Panc1 (cell line): ENCODE measurements at regions of chr12 and their contacts with region 1.

Region 1: DNA sequence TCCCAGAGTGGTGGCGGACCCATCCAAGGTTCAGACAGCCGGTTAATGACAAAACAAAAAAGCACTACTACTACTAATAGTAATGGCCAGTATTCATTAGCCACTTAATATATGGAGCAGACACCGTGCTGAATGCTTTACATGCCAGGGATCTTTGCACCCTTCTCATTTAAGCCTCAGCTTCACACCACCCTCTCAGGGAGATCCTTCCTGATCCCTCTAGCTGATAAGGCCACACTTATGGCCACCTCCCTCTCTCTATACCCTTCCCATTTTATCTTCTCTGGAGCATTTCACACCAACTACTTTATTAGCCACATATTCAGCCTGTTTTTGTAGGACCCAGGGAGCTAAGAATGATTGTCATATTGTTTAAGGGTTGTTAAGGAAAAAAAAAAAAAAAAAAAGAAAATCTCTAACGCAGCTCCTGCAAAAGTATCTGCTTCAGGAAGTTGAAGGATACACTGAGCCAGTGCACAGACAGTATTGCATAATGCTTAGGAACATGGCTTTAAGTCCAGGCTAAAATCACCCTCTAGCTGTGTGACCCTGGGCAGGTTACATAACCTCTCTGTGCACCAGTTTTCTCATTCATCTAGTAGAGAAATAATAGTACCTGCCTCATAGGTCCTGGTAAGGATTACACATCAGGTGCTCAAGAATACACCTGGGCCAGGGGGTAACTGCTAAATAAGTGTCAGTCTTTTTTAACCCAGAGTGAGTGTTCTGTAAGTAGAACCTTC is 29.4 kb downstream of the NUAK1 start:
- DNase-seq: no peak
- ATAC-seq: no peak
- H3K4me3 ChIP-seq: no peak overlapping the region
- H3K27ac ChIP-seq: peak overlapping the region; percentile 90
- H3K4me1 ChIP-seq: peaks cover 92% of the 10 kb centered on the region
- H3K27me3 ChIP-seq: no peaks in the 10 kb centered on the region
- CTCF ChIP-seq: no peak

Region 2: DNA sequence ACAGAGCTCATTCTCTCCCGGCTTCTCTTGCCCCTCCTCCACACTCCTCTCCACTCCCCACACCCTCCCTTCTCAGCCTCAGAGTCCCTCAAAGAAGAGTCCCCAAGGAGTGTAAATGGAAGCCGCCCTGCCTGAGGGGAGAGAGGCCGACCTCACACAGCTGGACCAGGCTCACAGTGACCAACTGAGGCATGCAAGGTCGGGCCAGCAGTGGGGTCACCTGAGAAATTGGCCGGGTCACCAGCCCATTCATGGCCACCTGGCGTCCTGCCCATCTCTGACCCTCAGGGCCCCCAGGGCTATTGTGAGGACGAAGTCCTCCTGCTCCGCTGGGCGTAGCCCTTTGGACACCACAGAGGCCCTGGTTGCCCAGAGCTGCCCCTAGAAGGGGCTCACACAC is 78.9 kb after region 1 on chr12:
- CTCF ChIA-PET with region 1: interaction called, 3 read pairs
- POLR2A ChIA-PET with region 1: interaction called, 10 read pairs
- in situ Hi-C with region 1: no loop called
- intact Hi-C with region 1: no loop called
- DNase-seq: no peak
- ATAC-seq: no peak
- H3K4me3 ChIP-seq: no peak overlapping the region
- H3K27ac ChIP-seq: no peak overlapping the region
- H3K4me1 ChIP-seq: no peaks in the 10 kb centered on the region
- H3K27me3 ChIP-seq: peaks cover 5% of the 10 kb centered on the region; the same call in 1 of the 2 replicates
- CTCF ChIP-seq: no peak

Region 3: DNA sequence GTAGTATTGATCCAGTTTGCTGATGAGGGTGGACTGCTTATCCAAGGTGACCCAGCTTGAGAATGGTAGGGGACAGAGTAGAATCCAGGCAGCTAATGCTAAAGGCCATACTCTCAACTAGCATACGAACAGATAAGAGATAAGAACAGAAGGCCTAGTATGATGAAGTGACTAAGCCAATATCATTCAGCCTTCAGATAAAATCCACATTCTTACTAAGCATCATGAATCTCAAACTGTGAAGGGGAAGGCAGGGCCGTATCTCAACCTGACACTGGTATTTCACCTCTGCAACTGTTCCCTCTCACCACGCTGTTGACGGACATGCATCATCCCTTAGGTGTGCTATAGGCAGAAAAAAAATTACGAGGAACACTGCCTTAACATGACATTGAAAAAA is 146.6 kb after region 1 on chr12:
- CTCF ChIA-PET with region 1: no interaction called
- POLR2A ChIA-PET with region 1: interaction called, 15 read pairs
- in situ Hi-C with region 1: no loop called
- intact Hi-C with region 1: no loop called
- DNase-seq: no peak
- ATAC-seq: no peak
- H3K4me3 ChIP-seq: no peak overlapping the region
- H3K27ac ChIP-seq: no peak overlapping the region
- H3K4me1 ChIP-seq: no peaks in the 10 kb centered on the region
- H3K27me3 ChIP-seq: no peaks in the 10 kb centered on the region
- CTCF ChIP-seq: no peak